ENCODE measurements at regions of chr4 and their contacts with region 1.

Region 1: GRCh38 chr4:151362404-151363164 is 37.2 kb upstream of the SH3D19 start:
- DNase-seq: peak; percentile 88
- ATAC-seq: peak; percentile 95
- H3K4me3 ChIP-seq: no peak overlapping the region
- H3K27ac ChIP-seq: no peak overlapping the region
- H3K4me1 ChIP-seq: peaks cover 10% of the 10 kb centered on the region
- H3K27me3 ChIP-seq: no peaks in the 10 kb centered on the region
- CTCF ChIP-seq: peak; percentile 92

Region 2: GRCh38 chr4:151117371-151117962 is 245.1 kb before region 1 on chr4:
- CTCF ChIA-PET with region 1: interaction called, 4 read pairs
- POLR2A ChIA-PET with region 1: no interaction called
- intact Hi-C with region 1: loop called (anchors 1 kb)
- DNase-seq: peak; percentile 72
- ATAC-seq: peak; percentile 67
- H3K4me3 ChIP-seq: no peak overlapping the region
- H3K27ac ChIP-seq: no peak overlapping the region
- H3K4me1 ChIP-seq: no peaks in the 10 kb centered on the region
- H3K27me3 ChIP-seq: no peaks in the 10 kb centered on the region
- CTCF ChIP-seq: peak; percentile 76

Region 3: DNA sequence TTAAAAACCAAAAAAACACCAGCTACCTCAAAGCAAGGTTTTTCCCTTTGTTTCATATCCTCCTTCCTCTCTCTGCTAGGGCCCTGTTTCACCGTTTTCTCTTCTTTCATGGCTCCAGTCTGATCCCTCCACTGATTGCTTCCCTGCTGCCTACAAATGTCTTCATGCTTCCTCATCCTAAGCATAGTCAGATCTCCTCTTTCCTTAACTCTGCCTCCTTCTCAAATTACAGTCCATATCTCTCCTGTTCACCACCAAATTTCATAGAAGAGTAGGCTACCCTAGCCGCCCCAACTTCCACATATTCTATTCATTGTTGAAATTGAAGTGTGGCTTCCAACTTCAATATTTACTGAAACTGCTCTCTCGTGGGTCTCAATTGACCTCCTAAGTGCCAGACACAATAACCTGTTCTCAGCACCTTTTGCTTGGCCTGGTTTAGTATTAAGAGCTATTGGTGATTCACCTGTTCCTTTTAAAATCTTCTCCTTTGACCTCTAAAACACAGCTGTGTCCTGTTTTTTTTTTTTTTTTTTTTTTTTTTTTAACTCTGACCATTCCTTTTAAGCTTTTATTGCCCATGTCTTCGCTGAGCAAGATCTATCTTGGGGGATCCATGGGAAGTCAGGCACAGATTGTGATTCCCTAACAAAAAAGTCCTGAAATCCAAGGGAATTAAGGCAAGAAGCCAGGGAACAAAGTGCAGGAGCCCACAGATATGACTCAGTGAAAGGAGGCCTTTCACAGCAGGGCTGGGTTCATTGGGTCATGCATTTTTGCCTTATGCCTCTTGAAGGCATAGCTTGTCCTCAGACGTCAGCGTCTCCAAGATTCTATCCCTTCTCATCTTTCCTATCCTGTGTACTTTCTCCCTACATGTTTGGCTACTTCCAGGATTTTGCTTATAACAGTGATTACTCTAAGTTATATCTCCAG is 177.8 kb before region 1 on chr4:
- CTCF ChIA-PET with region 1: no interaction called
- POLR2A ChIA-PET with region 1: no interaction called
- intact Hi-C with region 1: no loop called
- DNase-seq: peak; percentile 31
- ATAC-seq: peak; percentile 37; the same call in 1 of the 2 replicates
- H3K4me3 ChIP-seq: no peak overlapping the region
- H3K27ac ChIP-seq: peak overlapping the region; percentile 6; the same call in 1 of the 2 replicates
- H3K4me1 ChIP-seq: peaks cover 12% of the 10 kb centered on the region
- H3K27me3 ChIP-seq: no peaks in the 10 kb centered on the region
- CTCF ChIP-seq: no peak

Region 4: DNA sequence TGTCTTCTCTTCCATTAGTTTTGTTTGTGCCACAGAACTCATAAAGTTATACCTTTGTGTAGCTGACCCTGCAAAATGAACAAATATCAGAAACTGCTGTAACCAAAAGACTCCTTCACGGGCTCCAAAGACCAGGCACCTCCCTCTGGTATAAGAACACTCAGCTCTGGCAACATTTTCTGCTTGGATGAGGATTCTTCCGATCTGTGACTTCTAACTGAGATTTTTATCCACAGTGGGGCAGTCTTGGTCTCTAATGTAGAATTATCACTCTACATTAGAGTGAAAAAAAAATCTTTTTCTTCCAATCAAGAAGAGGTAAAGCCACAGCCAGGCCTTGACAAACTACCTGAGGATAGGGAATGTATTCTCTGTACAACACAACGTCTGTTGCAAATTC is 124.1 kb before region 1 on chr4:
- CTCF ChIA-PET with region 1: no interaction called
- POLR2A ChIA-PET with region 1: no interaction called
- intact Hi-C with region 1: loop called (anchors 2 kb)
- DNase-seq: peak; percentile 6
- ATAC-seq: peak; percentile 45
- H3K4me3 ChIP-seq: no peak overlapping the region
- H3K27ac ChIP-seq: no peak overlapping the region
- H3K4me1 ChIP-seq: no peaks in the 10 kb centered on the region
- H3K27me3 ChIP-seq: no peaks in the 10 kb centered on the region
- CTCF ChIP-seq: peak; percentile 26; the same call in 1 of the 2 replicates

Region 5: GRCh38 chr4:151284534-151285245 is 77.9 kb before region 1 on chr4:
- CTCF ChIA-PET with region 1: no interaction called
- POLR2A ChIA-PET with region 1: no interaction called
- intact Hi-C with region 1: loop called (anchors 5 kb)
- DNase-seq: no peak
- ATAC-seq: no peak
- H3K4me3 ChIP-seq: no peak overlapping the region
- H3K27ac ChIP-seq: no peak overlapping the region
- H3K4me1 ChIP-seq: no peaks in the 10 kb centered on the region
- H3K27me3 ChIP-seq: no peaks in the 10 kb centered on the region
- CTCF ChIP-seq: no peak

Region 6: DNA sequence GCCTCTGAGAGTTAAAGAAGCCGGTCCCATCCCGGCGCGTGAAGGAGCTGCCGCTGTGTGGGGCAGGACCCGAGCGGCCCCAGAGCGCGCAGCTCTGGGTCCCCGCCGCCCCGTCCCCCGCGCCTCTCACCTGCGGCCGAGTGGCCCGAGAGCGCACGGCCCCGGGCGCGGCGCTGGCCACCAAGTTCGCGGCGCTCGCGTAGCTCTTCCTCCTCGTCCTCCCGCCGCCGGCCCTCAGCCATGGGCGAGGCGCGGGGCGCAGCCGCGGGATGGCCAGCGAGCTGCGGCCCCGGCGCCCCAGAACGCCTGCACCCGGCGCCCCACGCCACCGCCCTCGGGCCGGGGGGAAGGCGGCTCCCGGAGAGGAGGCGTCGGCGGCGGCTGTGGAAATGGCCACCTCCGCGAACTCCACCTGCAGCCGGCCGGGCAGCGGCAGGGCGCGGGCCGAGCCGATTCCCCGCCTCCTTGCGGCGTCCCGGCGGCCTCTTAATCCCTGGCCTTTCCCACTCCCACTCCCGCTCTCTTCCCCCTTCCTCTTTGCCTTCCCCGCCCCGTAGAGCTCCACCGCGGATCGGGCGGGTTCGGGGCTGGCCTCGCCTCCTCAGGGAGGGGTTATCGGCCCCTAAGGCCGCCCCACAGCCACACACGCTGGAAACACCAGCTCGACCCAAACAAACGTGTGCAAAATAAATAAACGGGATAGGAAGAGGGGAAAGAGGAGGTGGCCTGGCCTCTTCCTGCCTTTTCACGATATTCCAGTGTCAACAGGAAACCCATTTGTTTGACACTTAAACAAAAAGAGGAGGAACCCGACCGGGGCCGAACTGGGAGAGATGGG is 37.3 kb before region 1 on chr4 and contains the start of gene SH3D19:
- CTCF ChIA-PET with region 1: no interaction called
- POLR2A ChIA-PET with region 1: no interaction called
- intact Hi-C with region 1: loop called (anchors 1 kb)
- DNase-seq: peak; percentile 85
- ATAC-seq: peak; percentile 79
- H3K4me3 ChIP-seq: peak within 1 kb of the TSS; percentile 71
- H3K27ac ChIP-seq: peak within 1 kb of the TSS; percentile 91
- H3K4me1 ChIP-seq: peaks cover 59% of the 10 kb centered on the region
- H3K27me3 ChIP-seq: no peaks in the 10 kb centered on the region
- CTCF ChIP-seq: no peak
- total RNA-seq, gene SH3D19: 30.1 and 31.1 TPM in 2 replicates

Region 7: DNA sequence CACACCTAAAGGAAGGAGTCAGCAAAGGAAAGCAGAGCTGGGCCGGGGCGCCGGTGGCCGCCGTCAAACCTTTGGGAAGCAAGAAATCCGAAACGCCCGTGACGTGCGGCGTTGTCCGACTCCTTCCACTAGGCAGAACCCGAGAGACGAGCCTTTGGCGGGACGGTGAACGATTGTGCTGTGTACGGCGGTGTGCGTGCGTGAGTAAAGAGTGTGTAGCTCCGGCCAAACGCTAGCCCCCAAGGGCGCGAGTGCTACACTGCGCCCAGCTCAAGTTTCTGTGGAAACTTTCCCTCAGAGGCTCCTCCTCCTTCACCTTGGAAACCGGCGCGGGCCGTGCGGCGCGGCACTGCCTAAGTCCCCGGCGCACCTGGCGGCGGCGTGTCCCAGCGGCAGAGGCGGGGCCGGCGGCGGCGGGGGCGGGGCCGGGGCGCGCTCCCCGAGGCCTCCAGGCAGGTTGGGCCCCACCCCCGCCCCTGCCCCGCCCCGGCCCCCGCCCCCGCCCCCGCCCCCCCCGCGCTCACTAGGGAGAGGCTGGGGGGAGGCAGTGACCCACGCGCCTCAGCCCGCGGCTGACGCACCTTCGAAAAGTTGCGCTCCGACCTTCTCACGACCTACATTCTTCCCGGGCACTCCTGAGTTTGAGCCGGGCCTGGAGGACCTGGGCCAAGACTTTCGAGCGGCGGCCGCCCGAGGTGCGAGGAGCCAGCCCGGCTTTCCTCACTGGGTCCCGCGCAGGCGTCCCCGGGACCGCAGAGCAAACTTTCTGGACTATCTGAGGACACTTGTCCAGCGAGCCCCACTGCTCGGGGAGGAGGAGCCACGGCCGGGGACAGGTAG is 46.3 kb after region 1 on chr4 and contains the start of gene FHIP1A:
- CTCF ChIA-PET with region 1: no interaction called
- POLR2A ChIA-PET with region 1: no interaction called
- intact Hi-C with region 1: loop called (anchors 2 kb)
- DNase-seq: peak; percentile 96
- ATAC-seq: peak; percentile 92
- H3K4me3 ChIP-seq: peak within 1 kb of the TSS; percentile 97
- H3K27ac ChIP-seq: peak within 1 kb of the TSS; percentile 90
- H3K4me1 ChIP-seq: peaks cover 16% of the 10 kb centered on the region
- H3K27me3 ChIP-seq: no peaks in the 10 kb centered on the region
- CTCF ChIP-seq: no peak
- total RNA-seq, gene FHIP1A: 11.3 and 13.8 TPM in 2 replicates

Region 8: DNA sequence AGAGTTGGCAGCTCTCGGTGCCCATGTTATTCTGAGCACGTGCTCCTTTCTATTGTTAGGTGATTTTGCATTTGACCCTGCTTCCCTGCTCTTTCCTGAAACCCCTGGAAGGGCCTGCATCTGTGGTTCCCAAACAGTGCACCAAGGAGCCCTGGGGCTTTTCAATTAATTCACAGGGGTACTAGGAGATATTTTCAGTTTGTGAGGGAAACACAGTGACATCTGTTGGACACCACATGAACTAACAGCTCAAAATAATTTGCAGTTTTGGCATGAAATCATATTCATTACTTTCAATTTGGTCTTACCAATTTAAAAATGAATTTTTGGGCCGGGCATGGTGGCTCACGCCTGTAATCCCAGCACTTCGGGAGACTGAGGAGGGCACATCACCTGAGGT is 241.7 kb after region 1 on chr4:
- CTCF ChIA-PET with region 1: no interaction called
- POLR2A ChIA-PET with region 1: no interaction called
- intact Hi-C with region 1: loop called (anchors 2 kb)
- DNase-seq: peak; percentile 36
- ATAC-seq: 0 out of 2 replicates have a peak, but pooled peaks have one; percentile 18
- H3K4me3 ChIP-seq: no peak overlapping the region
- H3K27ac ChIP-seq: no peak overlapping the region
- H3K4me1 ChIP-seq: no peaks in the 10 kb centered on the region
- H3K27me3 ChIP-seq: no peaks in the 10 kb centered on the region
- CTCF ChIP-seq: peak; percentile 59

Region 9: GRCh38 chr4:151614561-151614960 is 252.0 kb after region 1 on chr4:
- CTCF ChIA-PET with region 1: no interaction called
- POLR2A ChIA-PET with region 1: no interaction called
- intact Hi-C with region 1: no loop called
- DNase-seq: no peak
- ATAC-seq: no peak
- H3K4me3 ChIP-seq: no peak overlapping the region
- H3K27ac ChIP-seq: no peak overlapping the region
- H3K4me1 ChIP-seq: peaks cover 13% of the 10 kb centered on the region
- H3K27me3 ChIP-seq: no peaks in the 10 kb centered on the region
- CTCF ChIP-seq: no peak

Measured in PC-3 (cell line).